Activated CD4-positive, alpha-beta T cell treated with anti-CD3 and anti-CD28 coated beads for 36 hours (primary cell): ENCODE measurements at regions of chr9 and their contacts with region 1.

Region 1: GRCh38 chr9:96418074-96418809 is at the start of gene ZNF367:
- DNase-seq: peak; percentile 97
- ATAC-seq: peak; percentile 81
- H3K4me3 Mint-ChIP-seq: peak within 1 kb of the TSS; percentile 93
- H3K27ac Mint-ChIP-seq: peak within 1 kb of the TSS; percentile 90
- H3K4me1 Mint-ChIP-seq: peaks cover 38% of the 10 kb centered on the region
- H3K27me3 Mint-ChIP-seq: no peaks in the 10 kb centered on the region
- total RNA-seq, gene ZNF367: 22.0 to 24.2 TPM

Region 2: DNA sequence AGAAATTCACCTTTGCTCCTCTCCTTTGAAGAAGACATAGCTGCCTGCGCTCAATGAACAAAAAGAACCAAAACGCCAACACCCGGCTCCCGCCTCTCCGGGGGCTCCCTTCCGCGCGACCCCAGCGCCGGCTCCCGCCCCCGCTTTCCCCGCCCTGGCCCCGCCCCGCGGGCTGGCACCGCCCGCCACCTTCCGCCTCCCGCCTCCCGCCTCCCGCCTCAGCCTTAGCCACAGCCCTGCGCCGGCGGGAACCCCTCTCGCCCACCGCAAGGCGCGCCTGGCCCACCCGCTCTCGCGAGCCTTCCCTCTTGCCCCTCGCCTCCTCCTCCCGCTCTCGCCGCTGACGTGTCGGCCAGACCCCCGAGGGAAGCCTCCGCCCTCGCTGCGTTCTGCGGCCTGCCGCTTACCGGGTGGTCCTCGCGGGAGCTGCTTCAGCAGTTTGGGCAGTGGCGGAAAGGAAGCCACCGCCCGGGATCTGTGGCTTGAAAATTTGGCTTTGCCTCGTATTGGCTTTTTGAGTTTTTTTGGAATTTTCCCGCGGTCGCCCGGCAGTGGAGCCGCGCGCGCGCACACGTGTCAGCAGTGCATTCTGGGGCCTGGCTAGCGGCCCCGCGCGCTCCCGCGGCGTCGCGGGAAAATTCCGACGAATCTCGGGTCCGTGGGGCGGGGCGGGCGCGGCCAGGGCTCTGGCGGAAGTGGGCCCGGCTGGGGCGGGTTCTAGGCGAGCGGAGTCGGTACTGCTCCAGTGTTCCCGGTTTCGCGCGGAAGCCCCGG is 1100.9 kb before region 1 on chr9 and contains the start of gene FANCC:
- CTCF ChIA-PET with region 1: no interaction called
- POLR2A ChIA-PET with region 1: no interaction called
- intact Hi-C with region 1: loop called in 1 of 2 experiments (anchors 1 kb)
- DNase-seq: peak; percentile 90
- ATAC-seq: peak; percentile 84
- H3K4me3 Mint-ChIP-seq: peak within 1 kb of the TSS; percentile 85
- H3K27ac Mint-ChIP-seq: peak within 1 kb of the TSS; percentile 95
- H3K4me1 Mint-ChIP-seq: peaks cover 15% of the 10 kb centered on the region
- H3K27me3 Mint-ChIP-seq: peaks cover 7% of the 10 kb centered on the region
- total RNA-seq, gene FANCC: 15.9 to 16.7 TPM

Region 3: GRCh38 chr9:96061293-96061987 is 356.8 kb before region 1 on chr9:
- CTCF ChIA-PET with region 1: no interaction called
- POLR2A ChIA-PET with region 1: no interaction called
- intact Hi-C with region 1: no loop called
- DNase-seq: peak; percentile 63
- ATAC-seq: peak; percentile 78
- H3K4me3 Mint-ChIP-seq: no peak overlapping the region
- H3K27ac Mint-ChIP-seq: no peak overlapping the region
- H3K4me1 Mint-ChIP-seq: peaks cover 8% of the 10 kb centered on the region
- H3K27me3 Mint-ChIP-seq: no peaks in the 10 kb centered on the region

Region 4: DNA sequence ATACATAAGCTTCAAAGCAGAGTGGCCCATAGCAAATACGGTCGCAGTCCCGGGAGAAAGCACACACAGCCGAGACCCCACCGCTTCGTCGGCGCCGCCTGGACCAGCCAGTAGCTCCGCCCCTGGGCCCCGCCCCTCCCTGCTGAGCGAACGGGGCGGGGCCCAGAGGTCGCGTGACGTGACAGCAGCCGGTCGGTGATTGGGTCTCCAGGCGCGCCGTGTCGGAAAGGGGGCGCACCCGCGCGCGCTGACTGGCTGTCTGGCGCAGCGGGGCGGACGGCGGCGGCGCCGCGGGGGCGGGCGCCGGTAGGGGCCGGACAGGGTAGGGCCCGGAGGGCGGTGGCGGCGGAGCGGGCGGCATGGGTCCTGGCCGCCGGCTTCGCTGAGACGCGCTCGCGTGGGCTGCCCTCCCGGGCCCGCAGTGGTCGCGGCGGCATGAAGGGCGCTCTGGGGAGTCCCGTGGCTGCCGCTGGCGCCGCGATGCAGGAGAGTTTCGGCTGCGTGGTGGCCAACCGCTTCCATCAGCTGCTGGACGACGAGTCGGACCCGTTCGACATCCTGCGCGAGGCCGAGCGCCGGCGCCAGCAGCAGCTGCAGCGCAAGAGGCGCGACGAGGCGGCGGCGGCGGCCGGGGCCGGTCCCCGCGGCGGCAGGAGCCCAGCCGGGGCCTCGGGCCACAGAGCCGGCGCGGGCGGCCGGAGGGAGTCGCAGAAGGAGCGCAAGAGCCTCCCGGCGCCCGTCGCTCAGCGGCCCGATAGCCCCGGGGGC is 31.8 kb after region 1 on chr9 and contains the start of gene HABP4:
- CTCF ChIA-PET with region 1: interaction called, 3 read pairs
- POLR2A ChIA-PET with region 1: interaction called, 5 read pairs
- intact Hi-C with region 1: loop called (anchors 1 kb)
- DNase-seq: peak; percentile 98
- ATAC-seq: peak; percentile 96
- H3K4me3 Mint-ChIP-seq: peak within 1 kb of the TSS; percentile 84
- H3K27ac Mint-ChIP-seq: peak within 1 kb of the TSS; percentile 73
- H3K4me1 Mint-ChIP-seq: peaks cover 24% of the 10 kb centered on the region
- H3K27me3 Mint-ChIP-seq: peaks cover 9% of the 10 kb centered on the region
- total RNA-seq, gene HABP4: 5.8 to 7.3 TPM

Region 5: DNA sequence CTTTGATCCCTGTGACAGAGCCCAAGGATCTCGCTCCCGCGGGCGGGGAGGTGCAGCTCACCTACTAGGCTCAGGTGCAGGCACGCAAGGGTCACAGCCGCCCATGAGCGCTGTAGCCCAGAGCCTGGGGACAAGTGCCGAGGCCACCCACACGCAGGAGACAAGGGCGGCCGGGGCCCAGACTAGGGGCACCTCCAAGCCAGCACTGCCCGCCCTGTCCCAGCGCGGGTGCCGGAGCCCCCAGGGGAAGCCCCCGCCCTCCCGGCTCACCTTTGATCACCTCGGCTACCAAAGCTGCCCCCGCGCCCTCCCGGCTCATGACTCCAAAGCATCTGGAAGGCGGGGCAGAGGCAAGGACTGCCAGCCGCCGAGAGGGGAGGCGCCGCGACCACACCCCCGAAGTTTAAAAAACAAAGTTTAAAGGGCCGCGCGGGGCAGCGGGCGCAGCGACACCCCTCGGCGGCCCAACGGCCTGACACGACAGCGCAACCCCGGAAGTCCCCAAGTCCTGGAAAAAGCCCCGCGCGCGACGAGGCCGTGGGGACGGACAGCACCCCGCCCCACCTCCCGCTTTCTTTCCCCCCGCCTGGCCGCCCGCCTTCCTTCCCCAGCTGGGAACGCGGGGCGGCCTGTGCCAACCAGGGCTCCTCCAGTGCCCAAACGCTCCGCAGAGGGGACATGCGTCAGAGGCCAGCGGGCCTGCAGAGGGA is 148.4 kb after region 1 on chr9:
- CTCF ChIA-PET with region 1: no interaction called
- POLR2A ChIA-PET with region 1: no interaction called
- intact Hi-C with region 1: loop called (anchors 1 to 2 kb)
- DNase-seq: peak; percentile 85
- ATAC-seq: peak; percentile 78
- H3K4me3 Mint-ChIP-seq: peak overlapping the region; percentile 66
- H3K27ac Mint-ChIP-seq: peak overlapping the region; percentile 82
- H3K4me1 Mint-ChIP-seq: peaks cover 27% of the 10 kb centered on the region
- H3K27me3 Mint-ChIP-seq: peaks cover 2% of the 10 kb centered on the region

Region 6: GRCh38 chr9:96626912-96627311 is 208.7 kb after region 1 on chr9:
- CTCF ChIA-PET with region 1: no interaction called
- POLR2A ChIA-PET with region 1: no interaction called
- intact Hi-C with region 1: no loop called
- DNase-seq: no peak
- ATAC-seq: peak; percentile 26
- H3K4me3 Mint-ChIP-seq: no peak overlapping the region
- H3K27ac Mint-ChIP-seq: no peak overlapping the region
- H3K4me1 Mint-ChIP-seq: peaks cover 7% of the 10 kb centered on the region
- H3K27me3 Mint-ChIP-seq: peaks cover 16% of the 10 kb centered on the region

Region 7: GRCh38 chr9:96777426-96777864 is 359.2 kb after region 1 on chr9:
- CTCF ChIA-PET with region 1: no interaction called
- POLR2A ChIA-PET with region 1: no interaction called
- intact Hi-C with region 1: loop called in 1 of 2 experiments (anchors 5 kb)
- DNase-seq: no peak
- ATAC-seq: no peak
- H3K4me3 Mint-ChIP-seq: peak overlapping the region; percentile 93
- H3K27ac Mint-ChIP-seq: peak overlapping the region; percentile 95
- H3K4me1 Mint-ChIP-seq: peaks cover 24% of the 10 kb centered on the region
- H3K27me3 Mint-ChIP-seq: no peaks in the 10 kb centered on the region